WTC11 (cell line): ENCODE measurements at regions of chr11 and their contacts with region 1.

Region 1: GRCh38 chr11:86571273-86571948 is 101.0 kb downstream of the ME3 start:
- DNase-seq: peak; percentile 87
- ATAC-seq: peak; percentile 99
- H3K4me3 Mint-ChIP-seq: no peak overlapping the region
- H3K27ac Mint-ChIP-seq: no peak overlapping the region
- H3K4me1 Mint-ChIP-seq: peaks cover 5% of the 10 kb centered on the region
- H3K27me3 Mint-ChIP-seq: no peaks in the 10 kb centered on the region
- CTCF ChIP-seq: peak; percentile 61; the same call in 1 of the 2 replicates

Region 2: DNA sequence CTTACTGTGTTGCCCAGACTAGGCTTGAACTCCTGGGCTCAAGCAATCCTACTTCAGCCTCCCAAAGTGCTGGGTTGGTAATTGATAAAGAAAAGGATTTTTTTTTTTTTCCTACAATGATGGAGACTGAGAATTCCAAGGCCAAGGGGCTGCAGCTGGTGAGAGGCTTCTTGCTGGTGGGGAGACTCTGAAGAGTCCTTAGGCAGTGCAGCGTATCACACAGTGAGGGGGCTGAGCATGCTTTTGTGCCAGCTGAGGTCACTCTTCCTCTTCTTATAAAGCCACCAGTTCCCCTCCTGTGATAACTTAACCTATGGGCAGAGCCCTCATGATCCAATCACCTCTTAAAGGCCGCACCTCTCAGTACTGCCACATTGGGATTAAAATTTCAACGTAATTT is 224.9 kb before region 1 on chr11:
- CTCF ChIA-PET with region 1: no interaction called
- POLR2A ChIA-PET with region 1: no interaction called
- DNase-seq: no peak
- ATAC-seq: peak; percentile 79
- H3K4me3 Mint-ChIP-seq: no peak overlapping the region
- H3K27ac Mint-ChIP-seq: no peak overlapping the region
- H3K4me1 Mint-ChIP-seq: no peaks in the 10 kb centered on the region
- H3K27me3 Mint-ChIP-seq: no peaks in the 10 kb centered on the region
- CTCF ChIP-seq: no peak

Region 3: GRCh38 chr11:86456052-86456939 is 115.1 kb before region 1 on chr11:
- CTCF ChIA-PET with region 1: interaction called, 12 read pairs
- POLR2A ChIA-PET with region 1: no interaction called
- DNase-seq: peak; percentile 91
- ATAC-seq: peak; percentile 92
- H3K4me3 Mint-ChIP-seq: no peak overlapping the region
- H3K27ac Mint-ChIP-seq: no peak overlapping the region
- H3K4me1 Mint-ChIP-seq: peaks cover 13% of the 10 kb centered on the region
- H3K27me3 Mint-ChIP-seq: no peaks in the 10 kb centered on the region
- CTCF ChIP-seq: peak; percentile 77

Region 4: DNA sequence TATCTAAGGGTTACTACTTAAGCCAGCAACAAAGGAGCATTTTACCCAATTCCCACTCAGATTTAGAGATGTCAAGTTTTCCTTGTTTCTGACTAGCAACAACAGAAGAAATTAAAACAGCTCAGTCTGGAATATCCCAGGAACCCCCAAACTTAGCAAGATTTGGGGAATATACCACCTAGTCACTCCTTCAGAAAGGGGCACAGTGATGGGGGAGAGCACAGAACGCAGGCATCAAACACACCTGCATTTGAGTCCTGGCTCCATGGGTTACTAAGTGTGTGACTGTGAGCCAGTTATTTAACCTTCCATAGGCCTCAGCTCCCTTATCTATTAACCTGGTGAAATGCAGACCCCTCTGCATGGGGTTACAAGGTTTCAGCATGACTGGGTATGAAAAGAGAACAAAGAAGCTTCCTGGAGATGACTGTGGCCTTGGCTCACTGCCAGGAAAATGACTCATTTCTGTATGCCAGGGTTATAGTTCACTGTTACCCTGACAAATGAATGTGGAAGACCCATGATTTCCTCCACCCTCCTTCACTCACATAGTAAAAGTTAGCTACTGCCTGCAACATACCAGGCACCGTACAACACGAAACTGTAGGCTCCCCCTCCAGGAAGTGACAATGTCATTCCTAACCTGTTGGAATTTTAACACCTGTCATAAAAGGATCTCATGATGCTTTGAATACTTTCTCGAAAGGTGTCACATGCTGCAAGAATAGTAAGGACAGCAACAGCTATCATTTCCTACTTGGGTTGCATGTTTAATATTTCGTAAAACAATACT is 21.4 kb after region 1 on chr11:
- CTCF ChIA-PET with region 1: interaction called, 12 read pairs
- POLR2A ChIA-PET with region 1: interaction called, 3 read pairs
- DNase-seq: no peak
- ATAC-seq: peak; percentile 50
- H3K4me3 Mint-ChIP-seq: no peak overlapping the region
- H3K27ac Mint-ChIP-seq: no peak overlapping the region; the same call in 1 of the 2 replicates
- H3K4me1 Mint-ChIP-seq: peaks cover 57% of the 10 kb centered on the region
- H3K27me3 Mint-ChIP-seq: no peaks in the 10 kb centered on the region
- CTCF ChIP-seq: no peak